ENCODE measurements at regions of chr15 and their contacts with region 1.

Region 1: DNA sequence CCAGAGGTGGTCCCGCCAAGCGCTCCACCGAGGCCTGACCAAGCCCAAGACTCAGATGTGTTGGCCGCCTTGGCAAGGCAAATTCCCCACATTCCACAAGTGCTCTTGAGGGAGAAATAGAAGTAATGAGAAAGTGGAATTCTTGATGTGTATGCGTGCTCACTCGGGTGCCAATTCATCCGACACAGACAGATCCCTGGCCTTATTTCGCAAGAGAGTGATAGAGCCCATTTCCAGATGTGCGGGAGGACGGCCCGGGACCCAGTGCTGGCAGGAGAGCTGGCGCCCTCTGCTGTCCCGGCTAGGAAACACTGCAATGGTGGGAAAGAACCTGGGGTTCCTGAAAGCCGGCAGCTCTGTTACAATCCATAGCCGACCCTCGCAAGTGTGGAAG is 76.0 kb downstream of the HMG20A start:
- DNase-seq: peak; percentile 72
- H3K4me3 Mint-ChIP-seq: no peak overlapping the region
- H3K27ac Mint-ChIP-seq: no peak overlapping the region
- H3K4me1 Mint-ChIP-seq: peaks cover 19% of the 10 kb centered on the region
- H3K27me3 Mint-ChIP-seq: no peaks in the 10 kb centered on the region

Region 2: DNA sequence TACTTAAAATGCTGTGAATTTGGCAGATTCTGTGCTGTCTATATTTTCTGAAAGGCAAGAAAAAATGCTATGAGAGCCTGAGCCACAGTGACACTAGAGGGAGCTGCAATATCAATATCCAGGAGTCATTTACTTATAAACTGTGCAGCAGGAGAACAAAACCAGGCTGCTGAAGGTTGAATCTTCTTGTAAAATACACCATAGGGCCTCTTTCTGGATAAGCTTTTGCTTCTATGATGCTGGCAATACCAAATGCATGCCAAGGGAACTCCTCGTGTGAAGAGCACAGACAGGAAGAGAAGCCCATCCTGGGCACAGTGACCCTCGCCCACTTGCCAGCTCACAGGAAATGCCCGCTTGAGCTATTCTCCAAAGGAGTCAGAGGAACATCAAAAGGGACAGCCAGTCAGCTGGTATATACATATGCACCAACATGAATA is 377.8 kb before region 1 on chr15:
- CTCF ChIA-PET with region 1: interaction called, 10 read pairs
- POLR2A ChIA-PET with region 1: interaction called, 3 read pairs
- DNase-seq: peak; percentile 65
- H3K4me3 Mint-ChIP-seq: no peak overlapping the region
- H3K27ac Mint-ChIP-seq: no peak overlapping the region
- H3K4me1 Mint-ChIP-seq: peaks cover 14% of the 10 kb centered on the region
- H3K27me3 Mint-ChIP-seq: no peaks in the 10 kb centered on the region

Region 3: GRCh38 chr15:77470235-77470634 is 26.5 kb before region 1 on chr15:
- CTCF ChIA-PET with region 1: no interaction called
- POLR2A ChIA-PET with region 1: no interaction called
- DNase-seq: no peak
- H3K4me3 Mint-ChIP-seq: no peak overlapping the region
- H3K27ac Mint-ChIP-seq: no peak overlapping the region
- H3K4me1 Mint-ChIP-seq: no peaks in the 10 kb centered on the region
- H3K27me3 Mint-ChIP-seq: no peaks in the 10 kb centered on the region

Region 4: GRCh38 chr15:77514635-77515402 is 18.1 kb after region 1 on chr15:
- CTCF ChIA-PET with region 1: no interaction called
- POLR2A ChIA-PET with region 1: no interaction called
- DNase-seq: no peak
- H3K4me3 Mint-ChIP-seq: no peak overlapping the region
- H3K27ac Mint-ChIP-seq: no peak overlapping the region
- H3K4me1 Mint-ChIP-seq: no peaks in the 10 kb centered on the region
- H3K27me3 Mint-ChIP-seq: no peaks in the 10 kb centered on the region

Measured in activated CD4-positive, alpha-beta T cell treated with anti-CD3 and anti-CD28 coated beads, Interleukin-2, amount 10 ng/mL, durations not matched to agents 7 days and 5 days (primary cell).